Dendritic cell treated with granulocyte-macrophage colony-stimulating factor and Interleukin-4, amounts not matched to agents 40 ng/mL and 50 ng/mL, for 4 days (primary cell): ENCODE measurements at regions of chr11 and their contacts with region 1.

Region 1: GRCh38 chr11:36478700-36479329 is 31.3 kb downstream of the TRAF6 start:
- H3K4me3 Mint-ChIP-seq: no peak overlapping the region
- H3K27ac Mint-ChIP-seq: no peak overlapping the region
- H3K4me1 Mint-ChIP-seq: no peaks in the 10 kb centered on the region
- H3K27me3 Mint-ChIP-seq: no peaks in the 10 kb centered on the region

Region 2: DNA sequence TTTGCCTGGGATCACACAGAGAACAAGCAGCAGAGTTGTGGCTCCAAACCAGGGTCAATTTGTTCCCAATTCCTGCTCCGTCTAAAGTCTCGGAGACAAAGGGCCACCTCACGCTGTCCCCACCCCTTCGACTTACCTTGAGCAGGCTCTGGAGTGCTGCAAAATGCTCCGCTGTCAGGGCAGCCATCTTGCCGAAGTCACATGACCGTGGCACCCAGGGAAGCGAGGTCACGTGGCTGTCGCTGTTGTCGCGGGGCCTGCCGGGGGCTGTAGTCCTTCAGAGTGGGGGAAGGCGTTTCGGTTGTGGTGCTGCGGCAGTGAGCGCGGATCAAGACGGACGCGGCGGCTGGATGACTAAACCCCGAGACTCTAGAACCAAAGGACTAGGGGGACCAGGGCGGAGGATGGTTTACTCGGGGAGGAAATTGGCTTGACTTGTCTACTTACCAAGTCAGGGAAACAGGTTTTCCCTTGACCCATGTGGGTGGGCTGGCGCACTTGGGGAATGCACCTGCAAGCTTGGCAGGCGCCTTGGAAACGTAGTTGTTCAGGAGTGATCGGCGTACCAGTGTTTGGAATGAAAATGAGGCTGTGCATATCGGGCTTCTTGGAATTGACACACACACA is 189.5 kb before region 1 on chr11 and contains the start of gene COMMD9:
- intact Hi-C with region 1: loop called (anchors 1 kb)
- H3K4me3 Mint-ChIP-seq: peak within 1 kb of the TSS; percentile 93
- H3K27ac Mint-ChIP-seq: peak within 1 kb of the TSS; percentile 91
- H3K4me1 Mint-ChIP-seq: peaks cover 43% of the 10 kb centered on the region
- H3K27me3 Mint-ChIP-seq: peaks cover 2% of the 10 kb centered on the region

Region 3: GRCh38 chr11:36306888-36307287 is 171.9 kb before region 1 on chr11:
- intact Hi-C with region 1: loop called (anchors 2 kb)
- H3K4me3 Mint-ChIP-seq: no peak overlapping the region
- H3K27ac Mint-ChIP-seq: no peak overlapping the region
- H3K4me1 Mint-ChIP-seq: peaks cover 5% of the 10 kb centered on the region
- H3K27me3 Mint-ChIP-seq: peaks cover 8% of the 10 kb centered on the region

Region 4: GRCh38 chr11:36354221-36355003 is 124.4 kb before region 1 on chr11:
- intact Hi-C with region 1: loop called (anchors 5 kb)
- H3K4me3 Mint-ChIP-seq: no peak overlapping the region
- H3K27ac Mint-ChIP-seq: no peak overlapping the region
- H3K4me1 Mint-ChIP-seq: peaks cover 22% of the 10 kb centered on the region
- H3K27me3 Mint-ChIP-seq: peaks cover 25% of the 10 kb centered on the region

Region 5: GRCh38 chr11:36385121-36385970 is 93.5 kb before region 1 on chr11:
- intact Hi-C with region 1: no loop called
- H3K4me3 Mint-ChIP-seq: no peak overlapping the region
- H3K27ac Mint-ChIP-seq: no peak overlapping the region
- H3K4me1 Mint-ChIP-seq: peaks cover 40% of the 10 kb centered on the region
- H3K27me3 Mint-ChIP-seq: peaks cover 40% of the 10 kb centered on the region